Naive thymus-derived CD4-positive, alpha-beta T cell (primary cell): ENCODE measurements at regions of chr21 and their contacts with region 1.

Region 1: GRCh38 chr21:29024474-29025327 is at the start of gene USP16:
- DNase-seq: peak; percentile 86 to 97 (median 96)
- ATAC-seq: peak; percentile 94
- H3K4me3 ChIP-seq: peak within 1 kb of the TSS; percentile 88
- H3K4me3 Mint-ChIP-seq: peak within 1 kb of the TSS; percentile 88 to 99 (median 96)
- H3K27ac ChIP-seq: peak within 1 kb of the TSS; percentile 93
- H3K27ac Mint-ChIP-seq: peak within 1 kb of the TSS; percentile 97 to 100 (median 99)
- H3K4me1 ChIP-seq: peaks cover 35 to 41% of the 10 kb centered on the region in 2 donors
- H3K4me1 Mint-ChIP-seq: peaks cover 21 to 79% (median 53%) of the 10 kb centered on the region in 7 donors
- H3K27me3 ChIP-seq: no peaks in the 10 kb centered on the region
- H3K27me3 Mint-ChIP-seq: no peaks in the 10 kb centered on the region
- total RNA-seq, gene USP16: 40.9 to 84.3 (median 62.7) TPM

Region 2: GRCh38 chr21:28832013-28832714 is 192.5 kb before region 1 on chr21:
- CTCF ChIA-PET with region 1: no interaction called
- POLR2A ChIA-PET with region 1: interaction called, 3 read pairs
- intact Hi-C with region 1: loop called in 1 of 2 experiments (anchors 1 kb)
- DNase-seq: peak in 6 of 9 donors; percentile 29 to 64 (median 52)
- ATAC-seq: peak; percentile 91
- H3K4me3 ChIP-seq: peak overlapping the region; percentile 21
- H3K4me3 Mint-ChIP-seq: peak overlapping the region; percentile 12 to 75 (median 68)
- H3K27ac ChIP-seq: no peak overlapping the region
- H3K27ac Mint-ChIP-seq: peak overlapping the region; percentile 2 to 97 (median 68)
- H3K4me1 ChIP-seq: peaks cover 52 to 56% of the 10 kb centered on the region in 2 donors
- H3K4me1 Mint-ChIP-seq: peaks cover 46 to 82% (median 76%) of the 10 kb centered on the region in 7 donors
- H3K27me3 ChIP-seq: no peaks in the 10 kb centered on the region
- H3K27me3 Mint-ChIP-seq: no peaks in the 10 kb centered on the region

Region 3: DNA sequence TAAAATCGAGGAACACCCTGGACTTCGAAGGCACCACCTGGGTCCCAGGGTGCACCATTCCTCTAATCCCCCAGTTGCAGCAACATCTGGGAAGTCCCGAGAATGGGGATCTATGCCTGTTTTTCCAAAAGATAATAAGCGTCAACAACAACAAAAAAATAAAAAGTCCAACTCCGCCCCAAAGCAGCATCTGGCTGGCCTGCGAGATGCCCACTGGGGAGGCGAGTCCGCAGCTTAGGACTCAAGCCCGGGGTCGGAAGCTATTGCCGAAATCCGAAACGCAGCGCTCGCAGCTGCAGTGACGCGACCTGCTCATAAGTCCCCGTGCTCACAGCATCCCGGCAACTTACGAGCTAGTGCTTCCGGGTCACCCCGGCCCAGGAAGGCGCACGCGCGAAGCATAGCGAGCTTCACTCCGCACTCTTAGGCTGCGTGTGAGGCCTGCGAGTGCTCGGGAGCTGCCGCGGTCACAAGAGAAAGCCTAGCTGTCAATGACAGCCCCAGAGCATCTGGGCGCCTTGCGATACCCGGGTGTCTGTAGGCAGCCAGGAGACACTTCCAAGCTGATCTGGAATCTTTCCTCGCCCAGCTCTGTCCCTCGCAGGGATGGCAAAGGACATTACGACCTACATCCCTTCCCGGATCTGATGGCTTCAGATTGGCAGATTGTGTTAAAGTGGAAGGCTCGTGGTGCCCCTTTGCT is 22.1 kb before region 1 on chr21:
- CTCF ChIA-PET with region 1: interaction called, 4 read pairs
- POLR2A ChIA-PET with region 1: interaction called, 408 read pairs
- intact Hi-C with region 1: loop called (anchors 1 kb)
- DNase-seq: peak; percentile 90 to 96 (median 94)
- ATAC-seq: peak; percentile 100
- H3K4me3 ChIP-seq: peak overlapping the region; percentile 86
- H3K4me3 Mint-ChIP-seq: peak overlapping the region; percentile 85 to 95 (median 93)
- H3K27ac ChIP-seq: peak overlapping the region; percentile 92
- H3K27ac Mint-ChIP-seq: peak overlapping the region; percentile 97 to 99 (median 99)
- H3K4me1 ChIP-seq: peaks cover 0 to 3% of the 10 kb centered on the region in 2 donors
- H3K4me1 Mint-ChIP-seq: peaks cover 0 to 22% (median 10%) of the 10 kb centered on the region in 7 donors
- H3K27me3 ChIP-seq: no peaks in the 10 kb centered on the region
- H3K27me3 Mint-ChIP-seq: no peaks in the 10 kb centered on the region

Region 4: GRCh38 chr21:29205009-29205408 is 180.3 kb after region 1 on chr21:
- CTCF ChIA-PET with region 1: no interaction called
- POLR2A ChIA-PET with region 1: no interaction called
- intact Hi-C with region 1: no loop called
- DNase-seq: no peak
- ATAC-seq: no peak
- H3K4me3 ChIP-seq: no peak overlapping the region
- H3K4me3 Mint-ChIP-seq: no peak overlapping the region
- H3K27ac ChIP-seq: no peak overlapping the region
- H3K27ac Mint-ChIP-seq: no peak overlapping the region
- H3K4me1 ChIP-seq: no peaks in the 10 kb centered on the region
- H3K4me1 Mint-ChIP-seq: peaks cover 0 to 13% (median 0%) of the 10 kb centered on the region in 7 donors
- H3K27me3 ChIP-seq: no peaks in the 10 kb centered on the region
- H3K27me3 Mint-ChIP-seq: peaks cover 0 to 4% (median 0%) of the 10 kb centered on the region in 5 donors

Region 5: DNA sequence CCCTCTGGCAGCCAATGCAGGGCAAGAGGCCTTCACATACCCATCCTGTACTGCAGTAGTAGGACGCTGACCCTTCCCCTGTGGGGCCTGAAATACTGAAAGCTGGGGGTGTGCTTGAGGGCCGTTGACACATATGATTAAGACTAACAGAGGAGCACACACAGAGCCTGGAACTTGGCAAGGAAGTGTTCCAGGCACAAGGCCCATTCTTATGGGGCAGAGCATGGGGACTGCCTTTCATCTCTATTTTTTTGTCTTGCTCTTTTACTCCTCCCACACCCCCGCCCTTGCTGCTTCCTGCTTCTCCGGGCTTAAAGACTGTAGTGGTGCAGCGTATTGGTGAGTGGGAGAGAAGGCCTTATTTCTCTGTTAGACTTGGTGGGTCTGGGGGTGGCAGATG is 411.4 kb after region 1 on chr21:
- CTCF ChIA-PET with region 1: no interaction called
- POLR2A ChIA-PET with region 1: no interaction called
- intact Hi-C with region 1: loop called in 1 of 2 experiments (anchors 5 kb)
- DNase-seq: peak in 8 of 9 donors; percentile 28 to 69 (median 54)
- ATAC-seq: peak; percentile 90
- H3K4me3 ChIP-seq: peak overlapping the region; percentile 41
- H3K4me3 Mint-ChIP-seq: peak overlapping the region; percentile 80 to 91 (median 88)
- H3K27ac ChIP-seq: peak overlapping the region; percentile 63
- H3K27ac Mint-ChIP-seq: peak overlapping the region; percentile 81 to 98 (median 94)
- H3K4me1 ChIP-seq: peaks cover 10 to 17% of the 10 kb centered on the region in 2 donors
- H3K4me1 Mint-ChIP-seq: peaks cover 12 to 55% (median 34%) of the 10 kb centered on the region in 7 donors
- H3K27me3 ChIP-seq: no peaks in the 10 kb centered on the region
- H3K27me3 Mint-ChIP-seq: no peaks in the 10 kb centered on the region

Region 6: GRCh38 chr21:29870814-29871213 is 846.1 kb after region 1 on chr21:
- CTCF ChIA-PET with region 1: no interaction called
- POLR2A ChIA-PET with region 1: no interaction called
- intact Hi-C with region 1: no loop called
- DNase-seq: no peak
- ATAC-seq: no peak
- H3K4me3 ChIP-seq: no peak overlapping the region
- H3K4me3 Mint-ChIP-seq: no peak overlapping the region
- H3K27ac ChIP-seq: no peak overlapping the region
- H3K27ac Mint-ChIP-seq: no peak overlapping the region
- H3K4me1 ChIP-seq: no peaks in the 10 kb centered on the region
- H3K4me1 Mint-ChIP-seq: peaks cover 0 to 3% (median 0%) of the 10 kb centered on the region in 7 donors
- H3K27me3 ChIP-seq: no peaks in the 10 kb centered on the region
- H3K27me3 Mint-ChIP-seq: peaks cover 5 to 27% (median 9%) of the 10 kb centered on the region in 5 donors